MCF 10A (cell line): ENCODE measurements at regions of chr12 and their contacts with region 1.

Region 1: DNA sequence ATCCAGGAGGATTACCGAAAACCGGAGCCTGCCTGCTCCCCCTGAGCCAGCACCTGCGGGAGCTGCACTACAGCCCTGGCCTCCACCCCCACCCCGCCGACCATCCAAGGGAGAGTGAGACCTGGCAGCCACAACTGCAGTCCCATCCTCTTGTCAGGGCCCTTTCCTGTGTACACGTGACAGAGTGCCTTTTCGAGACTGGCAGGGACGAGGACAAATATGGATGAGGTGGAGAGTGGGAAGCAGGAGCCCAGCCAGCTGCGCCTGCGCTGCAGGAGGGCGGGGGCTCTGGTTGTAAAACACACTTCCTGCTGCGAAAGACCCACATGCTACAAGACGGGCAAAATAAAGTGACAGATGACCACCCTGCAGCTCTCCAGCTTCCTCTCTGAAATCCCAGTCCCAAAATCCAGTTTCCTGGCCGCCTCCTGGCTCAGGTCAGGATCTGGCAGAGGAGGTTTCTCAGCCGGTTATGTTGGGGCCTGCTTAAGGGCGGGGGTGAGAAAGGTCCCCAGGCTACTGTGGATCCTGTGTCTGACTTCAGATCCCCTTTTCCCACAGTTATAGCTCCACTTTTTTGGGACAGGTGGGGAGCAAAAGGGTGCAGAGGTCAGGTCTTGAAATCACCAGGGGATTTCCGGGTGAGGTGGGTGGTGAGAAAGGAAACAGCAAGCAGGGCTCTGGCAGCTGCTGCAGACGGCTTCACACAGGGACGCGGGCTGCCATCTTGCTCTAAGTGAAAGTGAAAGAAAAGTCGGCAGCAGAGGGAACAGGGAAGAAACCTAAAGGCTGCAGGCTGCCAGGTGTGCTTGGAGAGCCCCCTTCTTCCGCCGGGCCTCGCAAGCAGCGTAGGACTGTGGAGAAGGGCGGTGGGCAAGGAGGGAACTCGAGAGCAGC is at the start of gene TAPBPL:
- DNase-seq: peak; percentile 72
- H3K4me3 Mint-ChIP-seq: peak within 1 kb of the TSS; percentile 94
- H3K27ac Mint-ChIP-seq: peak within 1 kb of the TSS; percentile 98
- H3K4me1 Mint-ChIP-seq: peaks cover 37% of the 10 kb centered on the region
- H3K27me3 Mint-ChIP-seq: no peaks in the 10 kb centered on the region
- CTCF ChIP-seq: no peak
- total RNA-seq, gene TAPBPL: 8.1 and 9.3 TPM in 2 replicates

Region 2: DNA sequence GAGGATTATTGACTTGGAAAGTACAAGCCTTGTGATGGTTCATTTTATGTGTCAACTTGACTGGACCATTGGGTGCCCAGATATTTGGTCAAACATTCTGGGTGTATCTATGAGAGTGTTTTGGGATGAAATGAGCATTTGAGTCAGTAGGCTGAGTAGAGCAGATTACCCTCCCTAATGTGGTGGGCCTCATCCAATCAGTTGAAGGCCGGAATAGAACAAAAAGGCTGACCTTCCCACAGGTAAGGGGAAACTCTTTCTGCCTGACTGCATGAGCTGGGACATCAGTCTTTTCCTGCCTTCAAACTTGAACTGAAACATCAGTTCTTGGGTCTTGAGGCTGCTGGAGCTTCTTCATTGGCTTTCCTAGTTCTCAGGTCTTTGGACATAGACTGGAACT is 604.6 kb before region 1 on chr12:
- CTCF ChIA-PET with region 1: no interaction called
- POLR2A ChIA-PET with region 1: no interaction called
- intact Hi-C with region 1: no loop called
- DNase-seq: no peak
- H3K4me3 Mint-ChIP-seq: no peak overlapping the region
- H3K27ac Mint-ChIP-seq: no peak overlapping the region
- H3K4me1 Mint-ChIP-seq: no peaks in the 10 kb centered on the region
- H3K27me3 Mint-ChIP-seq: no peaks in the 10 kb centered on the region
- CTCF ChIP-seq: no peak

Region 3: GRCh38 chr12:6335451-6336078 is 116.0 kb before region 1 on chr12:
- CTCF ChIA-PET with region 1: no interaction called
- POLR2A ChIA-PET with region 1: interaction called, 11 read pairs
- intact Hi-C with region 1: no loop called
- DNase-seq: peak; percentile 85
- H3K4me3 Mint-ChIP-seq: no peak overlapping the region
- H3K27ac Mint-ChIP-seq: no peak overlapping the region
- H3K4me1 Mint-ChIP-seq: peaks cover 24% of the 10 kb centered on the region
- H3K27me3 Mint-ChIP-seq: no peaks in the 10 kb centered on the region
- CTCF ChIP-seq: peak; percentile 44

Region 4: GRCh38 chr12:6383572-6384498 is 67.8 kb before region 1 on chr12 and contains the start of gene LTBR:
- CTCF ChIA-PET with region 1: no interaction called
- POLR2A ChIA-PET with region 1: interaction called, 14 read pairs
- intact Hi-C with region 1: no loop called
- DNase-seq: peak; percentile 96
- H3K4me3 Mint-ChIP-seq: peak within 1 kb of the TSS; percentile 94
- H3K27ac Mint-ChIP-seq: peak within 1 kb of the TSS; percentile 96
- H3K4me1 Mint-ChIP-seq: peaks cover 35% of the 10 kb centered on the region
- H3K27me3 Mint-ChIP-seq: no peaks in the 10 kb centered on the region
- CTCF ChIP-seq: no peak
- total RNA-seq, gene LTBR: 158 and 169 TPM in 2 replicates

Region 5: DNA sequence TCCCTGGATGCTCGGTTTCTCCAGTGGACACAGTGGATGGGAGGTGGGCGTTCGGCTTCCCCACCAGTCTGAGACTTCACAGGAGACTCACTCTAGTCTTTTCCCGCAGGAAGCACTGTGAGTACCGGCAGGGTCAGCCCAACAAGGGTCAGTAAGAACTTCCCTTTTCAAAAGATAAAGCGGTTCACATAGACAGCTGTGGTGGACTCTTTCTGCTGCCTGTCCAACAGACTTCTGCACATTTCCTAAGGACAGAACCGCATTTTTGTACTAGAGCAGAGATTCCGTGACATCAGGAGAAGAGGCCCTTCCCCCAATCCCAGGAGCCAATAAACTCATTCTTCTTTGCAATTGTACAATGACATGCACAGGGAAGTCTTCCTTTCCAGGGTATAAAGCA is 57.2 kb before region 1 on chr12:
- CTCF ChIA-PET with region 1: no interaction called
- POLR2A ChIA-PET with region 1: no interaction called
- intact Hi-C with region 1: no loop called
- DNase-seq: no peak
- H3K4me3 Mint-ChIP-seq: no peak overlapping the region
- H3K27ac Mint-ChIP-seq: no peak overlapping the region
- H3K4me1 Mint-ChIP-seq: peaks cover 7% of the 10 kb centered on the region
- H3K27me3 Mint-ChIP-seq: no peaks in the 10 kb centered on the region
- CTCF ChIP-seq: no peak

Region 6: DNA sequence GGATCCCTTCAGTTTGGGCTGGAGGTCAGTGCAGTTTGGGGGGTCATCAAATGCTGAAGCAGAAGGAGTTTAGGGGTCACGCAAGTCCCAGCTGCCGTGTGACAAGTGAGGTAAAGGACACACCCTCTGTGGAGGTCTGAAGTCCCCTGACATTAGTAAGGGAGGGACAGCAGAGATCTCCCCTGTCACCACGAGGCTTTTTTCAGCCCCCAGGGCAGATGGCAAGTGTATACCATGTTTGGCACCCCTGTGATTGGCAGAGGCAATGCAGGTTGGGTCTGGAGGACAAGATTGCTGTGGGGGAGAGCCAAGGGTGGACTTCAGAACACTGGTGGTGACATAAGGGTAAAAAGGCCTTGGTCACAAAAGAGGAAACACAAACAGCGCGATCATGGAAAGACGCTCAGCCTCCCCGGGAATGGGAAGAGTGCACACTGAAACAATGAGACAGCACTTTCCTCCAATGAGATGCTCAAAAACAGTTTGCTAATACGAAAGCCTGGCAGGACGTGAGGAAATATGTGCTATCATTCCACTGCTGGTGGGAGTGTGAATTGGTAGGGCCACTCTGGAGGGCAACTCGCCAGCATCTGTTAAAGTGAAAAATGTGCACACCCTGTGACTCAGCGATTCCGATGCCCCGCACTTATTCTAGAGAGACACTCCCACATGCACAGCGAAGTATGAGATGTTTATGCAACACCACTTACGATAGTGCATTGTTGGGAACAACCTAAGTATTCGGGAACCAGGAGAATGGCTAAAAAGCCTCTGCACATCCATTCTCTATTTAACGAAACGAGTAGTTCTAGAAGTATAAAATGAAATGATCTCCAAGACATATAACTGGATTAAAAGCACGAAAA is 21.2 kb before region 1 on chr12:
- CTCF ChIA-PET with region 1: interaction called, 14 read pairs
- POLR2A ChIA-PET with region 1: interaction called, 23 read pairs
- intact Hi-C with region 1: loop called (anchors 1 kb)
- DNase-seq: peak; percentile 99
- H3K4me3 Mint-ChIP-seq: peak overlapping the region; percentile 60
- H3K27ac Mint-ChIP-seq: peak overlapping the region; percentile 81
- H3K4me1 Mint-ChIP-seq: peaks cover 17% of the 10 kb centered on the region
- H3K27me3 Mint-ChIP-seq: no peaks in the 10 kb centered on the region
- CTCF ChIP-seq: no peak

Region 7: GRCh38 chr12:6493497-6494257 is 42.1 kb after region 1 on chr12 and contains the start of gene NCAPD2:
- CTCF ChIA-PET with region 1: no interaction called
- POLR2A ChIA-PET with region 1: interaction called, 27 read pairs
- intact Hi-C with region 1: no loop called
- DNase-seq: peak; percentile 96
- H3K4me3 Mint-ChIP-seq: peak within 1 kb of the TSS; percentile 95
- H3K27ac Mint-ChIP-seq: peak within 1 kb of the TSS; percentile 98
- H3K4me1 Mint-ChIP-seq: peaks cover 21% of the 10 kb centered on the region
- H3K27me3 Mint-ChIP-seq: no peaks in the 10 kb centered on the region
- CTCF ChIP-seq: no peak
- total RNA-seq, gene NCAPD2: 31.9 and 52.0 TPM in 2 replicates